Activated CD4-positive, alpha-beta T cell treated with anti-CD3 and anti-CD28 coated beads for 36 hours (primary cell): ENCODE measurements at regions of chr10 and their contacts with region 1.

Region 1: GRCh38 chr10:72162978-72163377 is 52.8 kb upstream of the ANAPC16 start:
- DNase-seq: peak; percentile 25
- ATAC-seq: peak; percentile 94
- H3K4me3 Mint-ChIP-seq: no peak overlapping the region
- H3K27ac Mint-ChIP-seq: peak overlapping the region; percentile 85
- H3K4me1 Mint-ChIP-seq: peaks cover 35% of the 10 kb centered on the region
- H3K27me3 Mint-ChIP-seq: no peaks in the 10 kb centered on the region

Region 2: GRCh38 chr10:72088889-72089575 is 73.9 kb before region 1 on chr10:
- CTCF ChIA-PET with region 1: no interaction called
- POLR2A ChIA-PET with region 1: no interaction called
- intact Hi-C with region 1: loop called in 1 of 2 experiments (anchors 2 kb)
- DNase-seq: peak; percentile 79
- ATAC-seq: peak; percentile 50
- H3K4me3 Mint-ChIP-seq: peak overlapping the region; percentile 98
- H3K27ac Mint-ChIP-seq: peak overlapping the region; percentile 100
- H3K4me1 Mint-ChIP-seq: peaks cover 57% of the 10 kb centered on the region
- H3K27me3 Mint-ChIP-seq: no peaks in the 10 kb centered on the region

Region 3: DNA sequence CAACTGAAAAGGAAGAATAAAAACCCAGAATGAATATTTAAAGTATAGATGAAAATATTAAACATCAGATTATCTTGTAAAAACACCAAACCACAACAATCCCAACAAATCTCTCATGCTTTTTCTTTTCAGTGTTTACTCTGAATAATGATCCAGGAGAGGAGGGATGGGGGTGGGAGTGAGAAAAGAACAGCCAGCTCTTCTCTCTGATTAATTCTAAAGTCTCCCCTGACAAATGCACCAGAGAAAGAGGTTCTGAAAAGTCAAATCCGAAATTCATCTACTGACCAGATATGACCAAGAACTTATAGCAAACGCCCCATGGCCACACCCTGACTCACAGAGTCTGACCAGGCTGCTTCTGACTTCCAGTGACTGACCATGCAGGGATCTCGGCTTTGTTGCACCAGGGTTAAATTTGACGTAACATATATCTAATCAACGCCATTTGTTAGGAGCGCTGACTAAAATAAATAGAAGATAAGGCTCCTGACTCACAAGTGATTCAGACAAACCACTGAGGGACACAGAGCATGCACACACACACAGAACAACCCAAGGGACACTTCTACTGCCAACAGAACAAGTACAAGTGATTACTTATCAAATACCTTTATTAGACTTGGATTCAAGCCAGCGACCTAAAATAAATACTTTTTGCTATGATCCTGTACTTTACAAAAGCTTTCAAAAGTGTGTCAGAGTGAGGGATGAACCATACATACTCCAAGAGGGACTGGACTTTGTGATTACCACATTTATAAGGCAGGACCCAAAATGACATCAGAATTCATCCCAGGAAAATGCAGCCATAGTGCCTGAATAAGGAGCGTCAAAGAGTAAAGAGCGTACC is 65.3 kb before region 1 on chr10:
- CTCF ChIA-PET with region 1: no interaction called
- POLR2A ChIA-PET with region 1: no interaction called
- intact Hi-C with region 1: loop called in 1 of 2 experiments (anchors 5 kb)
- DNase-seq: no peak
- ATAC-seq: peak; percentile 60
- H3K4me3 Mint-ChIP-seq: no peak overlapping the region
- H3K27ac Mint-ChIP-seq: peak overlapping the region; percentile 53
- H3K4me1 Mint-ChIP-seq: peaks cover 72% of the 10 kb centered on the region
- H3K27me3 Mint-ChIP-seq: no peaks in the 10 kb centered on the region

Region 4: DNA sequence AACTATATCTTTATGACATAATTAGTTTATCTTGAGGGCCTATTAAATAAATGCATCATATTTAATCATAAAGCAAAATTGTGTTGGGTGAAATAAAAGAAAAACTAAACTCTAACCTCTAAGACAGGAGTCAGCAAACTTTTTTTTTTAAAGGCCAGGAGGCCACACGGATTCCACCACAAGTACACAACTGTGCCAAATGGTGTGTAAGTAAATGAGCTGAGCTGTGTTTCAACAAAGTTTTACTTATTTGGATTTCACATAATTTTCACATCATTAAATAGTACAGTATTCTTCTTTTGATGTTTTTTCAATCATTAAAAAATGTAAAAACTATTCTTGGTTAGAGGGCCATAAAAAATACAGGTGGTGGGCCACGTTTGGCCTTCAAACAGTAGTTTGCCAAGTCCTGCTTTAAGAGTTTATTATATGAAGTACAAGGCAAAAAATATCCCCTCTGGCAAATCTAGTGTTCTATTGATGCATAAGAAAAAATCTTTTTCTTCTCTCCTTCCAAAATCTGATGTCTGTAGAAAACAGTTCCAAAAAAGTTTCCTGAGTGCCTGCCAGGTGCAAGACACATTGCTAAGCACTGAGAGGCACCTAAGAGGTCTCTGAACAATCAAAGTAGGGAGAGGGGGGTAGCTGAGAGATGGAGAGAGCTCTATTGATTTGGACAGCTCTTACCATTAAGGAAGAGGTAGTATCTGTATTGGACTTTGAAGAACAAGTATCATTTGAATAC is 48.1 kb before region 1 on chr10:
- CTCF ChIA-PET with region 1: no interaction called
- POLR2A ChIA-PET with region 1: no interaction called
- intact Hi-C with region 1: no loop called
- DNase-seq: no peak
- ATAC-seq: no peak
- H3K4me3 Mint-ChIP-seq: no peak overlapping the region
- H3K27ac Mint-ChIP-seq: no peak overlapping the region
- H3K4me1 Mint-ChIP-seq: peaks cover 35% of the 10 kb centered on the region
- H3K27me3 Mint-ChIP-seq: no peaks in the 10 kb centered on the region

Region 5: GRCh38 chr10:72146071-72146470 is 16.9 kb before region 1 on chr10:
- CTCF ChIA-PET with region 1: no interaction called
- POLR2A ChIA-PET with region 1: interaction called, 3 read pairs
- intact Hi-C with region 1: loop called in 1 of 2 experiments (anchors 1 kb)
- DNase-seq: no peak
- ATAC-seq: no peak
- H3K4me3 Mint-ChIP-seq: no peak overlapping the region
- H3K27ac Mint-ChIP-seq: no peak overlapping the region
- H3K4me1 Mint-ChIP-seq: peaks cover 23% of the 10 kb centered on the region
- H3K27me3 Mint-ChIP-seq: no peaks in the 10 kb centered on the region

Region 6: GRCh38 chr10:72204296-72204695 is 41.3 kb after region 1 on chr10:
- CTCF ChIA-PET with region 1: interaction called, 4 read pairs
- POLR2A ChIA-PET with region 1: no interaction called
- intact Hi-C with region 1: loop called in 1 of 2 experiments (anchors 5 kb)
- DNase-seq: no peak
- ATAC-seq: no peak
- H3K4me3 Mint-ChIP-seq: no peak overlapping the region
- H3K27ac Mint-ChIP-seq: no peak overlapping the region
- H3K4me1 Mint-ChIP-seq: peaks cover 10% of the 10 kb centered on the region
- H3K27me3 Mint-ChIP-seq: no peaks in the 10 kb centered on the region